A673 (cell line): ENCODE measurements at regions of chr1 and their contacts with region 1.

Region 1: DNA sequence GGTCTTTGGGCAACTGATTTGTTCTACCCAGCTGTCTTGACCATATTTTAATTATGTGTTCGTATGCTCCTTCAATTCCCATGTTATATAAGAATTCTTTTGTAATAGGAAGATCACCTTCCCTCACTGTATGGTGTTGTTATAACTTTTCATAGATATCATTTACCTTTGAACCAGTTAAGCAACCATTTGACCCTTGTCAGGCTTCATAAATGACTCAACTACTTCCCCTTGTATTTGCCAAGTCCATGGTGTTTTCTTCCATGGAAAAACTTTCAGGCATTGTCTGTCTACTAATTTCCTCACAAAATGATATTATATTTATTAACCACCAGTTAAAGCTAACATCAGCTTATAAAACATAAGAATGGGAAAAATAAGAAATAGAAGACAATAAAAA is 5.1 kb downstream of the BPNT1 start:
- DNase-seq: no peak
- H3K4me3 ChIP-seq: no peak overlapping the region
- H3K27ac ChIP-seq: no peak overlapping the region
- H3K4me1 ChIP-seq: no peaks in the 10 kb centered on the region
- H3K27me3 ChIP-seq: no peaks in the 10 kb centered on the region
- CTCF ChIP-seq: no peak

Region 2: DNA sequence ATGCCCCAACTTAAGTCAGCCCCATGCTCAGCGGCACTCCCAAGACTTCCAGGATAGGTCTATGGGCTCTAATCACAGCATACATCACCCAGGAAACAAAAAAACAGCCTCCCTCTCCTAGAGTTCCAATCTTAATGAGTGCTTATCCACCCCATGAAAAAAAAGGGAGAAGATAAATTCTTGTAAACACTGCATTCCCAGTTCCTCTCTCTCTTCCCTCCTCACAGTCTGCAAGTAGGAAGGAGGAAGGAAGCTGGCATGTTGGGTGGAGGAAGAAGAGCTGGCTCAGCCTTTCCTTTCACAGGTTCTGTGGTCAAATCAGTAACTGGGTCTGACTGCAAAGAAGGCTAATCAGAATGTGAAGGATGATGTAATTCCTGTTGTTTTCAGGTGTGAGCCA is 401.7 kb before region 1 on chr1:
- CTCF ChIA-PET with region 1: no interaction called
- POLR2A ChIA-PET with region 1: no interaction called
- intact Hi-C with region 1: no loop called
- DNase-seq: no peak
- H3K4me3 ChIP-seq: no peak overlapping the region
- H3K27ac ChIP-seq: no peak overlapping the region
- H3K4me1 ChIP-seq: no peaks in the 10 kb centered on the region
- H3K27me3 ChIP-seq: peaks cover 22% of the 10 kb centered on the region
- CTCF ChIP-seq: no peak

Region 3: GRCh38 chr1:219990782-219991510 is 93.5 kb before region 1 on chr1:
- CTCF ChIA-PET with region 1: no interaction called
- POLR2A ChIA-PET with region 1: interaction called, 11 read pairs
- intact Hi-C with region 1: no loop called
- DNase-seq: peak; percentile 56
- H3K4me3 ChIP-seq: no peak overlapping the region
- H3K27ac ChIP-seq: no peak overlapping the region
- H3K4me1 ChIP-seq: no peaks in the 10 kb centered on the region
- H3K27me3 ChIP-seq: no peaks in the 10 kb centered on the region
- CTCF ChIP-seq: peak; percentile 72